CD4-positive, alpha-beta memory T cell (primary cell): ENCODE measurements at regions of chr22 and their contacts with region 1.

Region 1: DNA sequence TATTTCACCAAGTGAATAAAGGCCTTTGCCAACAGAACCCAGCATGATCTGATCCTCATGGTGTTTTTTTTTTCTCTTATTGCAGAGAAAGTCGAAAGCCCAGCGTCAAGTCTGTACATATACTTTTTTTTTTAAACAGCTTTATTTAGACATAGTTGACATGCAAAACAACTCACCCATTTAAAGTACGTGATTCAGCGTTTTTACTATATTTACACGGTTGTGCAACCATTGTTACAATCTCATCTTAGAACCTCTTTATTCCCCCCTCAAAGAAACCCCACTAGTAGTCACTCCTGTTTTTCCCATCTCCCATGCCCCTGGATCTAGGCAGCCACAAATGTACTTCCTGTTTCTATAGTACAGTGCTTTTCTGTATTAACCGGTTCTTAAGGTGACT is 20.6 kb upstream of the AP1B1 start:
- DNase-seq: no peak
- H3K4me3 ChIP-seq: no peak overlapping the region
- H3K4me3 Mint-ChIP-seq: no peak overlapping the region
- H3K27ac ChIP-seq: no peak overlapping the region
- H3K27ac Mint-ChIP-seq: peak overlapping the region in 1 of 7 donors; percentile 49
- H3K4me1 ChIP-seq: no peaks in the 10 kb centered on the region
- H3K4me1 Mint-ChIP-seq: peaks cover under 1 to 6% (median 4%) of the 10 kb centered on the region in 4 donors
- H3K27me3 ChIP-seq: no peaks in the 10 kb centered on the region
- H3K27me3 Mint-ChIP-seq: no peaks in the 10 kb centered on the region

Region 2: DNA sequence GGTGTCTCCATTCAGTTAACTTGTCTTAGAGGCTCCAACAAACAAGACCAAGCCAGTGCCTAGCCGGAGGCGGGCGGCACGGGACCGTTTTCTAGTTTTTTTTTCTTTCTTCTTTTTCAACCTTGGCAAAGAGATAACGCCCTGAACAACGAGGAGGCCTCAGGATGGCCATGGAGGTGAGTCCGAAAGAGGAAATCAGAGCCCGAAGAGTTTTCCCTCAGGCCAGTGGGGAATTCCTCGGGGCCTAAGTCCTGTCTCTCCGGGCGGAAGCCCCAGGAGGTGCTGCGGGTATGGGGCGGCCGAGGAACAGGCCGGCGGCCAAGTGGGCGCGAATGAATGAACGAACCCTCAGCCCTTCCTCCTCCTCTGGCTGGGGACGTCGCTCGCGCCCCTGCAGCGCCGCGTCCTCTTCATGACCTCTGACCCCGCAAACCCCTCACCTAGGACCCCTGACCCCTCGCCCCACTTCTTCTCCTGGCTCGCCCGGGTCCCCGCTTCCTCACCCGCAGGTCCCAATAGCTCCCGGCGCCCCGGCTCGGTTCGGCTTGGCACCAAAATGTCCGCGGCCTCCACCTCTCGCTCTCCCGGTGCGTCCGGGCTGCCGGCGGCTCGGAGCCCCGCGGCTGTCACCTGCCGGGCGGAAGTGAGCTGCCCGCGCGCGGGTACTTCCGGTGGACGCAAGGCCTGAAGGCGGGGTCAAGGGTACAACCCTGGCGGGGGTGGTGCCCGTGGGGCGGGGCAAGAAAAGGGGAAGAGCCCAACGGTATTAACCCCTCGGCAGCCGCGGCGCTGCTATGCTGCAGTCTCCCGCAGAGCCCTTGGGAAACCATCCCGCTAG is 20.8 kb before region 1 on chr22 and contains the start of gene AP1B1:
- CTCF ChIA-PET with region 1: interaction called, 8 read pairs
- POLR2A ChIA-PET with region 1: no interaction called
- intact Hi-C with region 1: loop called (anchors 2 kb)
- DNase-seq: peak; percentile 87 to 91 (median 88)
- H3K4me3 ChIP-seq: peak within 1 kb of the TSS; percentile 64 to 77
- H3K4me3 Mint-ChIP-seq: peak within 1 kb of the TSS; percentile 89 to 98 (median 93)
- H3K27ac ChIP-seq: peak within 1 kb of the TSS; percentile 86
- H3K27ac Mint-ChIP-seq: peak within 1 kb of the TSS; percentile 90 to 96 (median 95)
- H3K4me1 ChIP-seq: peaks cover 54% of the 10 kb centered on the region
- H3K4me1 Mint-ChIP-seq: peaks cover 26 to 54% (median 39%) of the 10 kb centered on the region in 4 donors
- H3K27me3 ChIP-seq: no peaks in the 10 kb centered on the region
- H3K27me3 Mint-ChIP-seq: no peaks in the 10 kb centered on the region
- total RNA-seq, gene AP1B1: 41.3 to 42.7 TPM

Region 3: DNA sequence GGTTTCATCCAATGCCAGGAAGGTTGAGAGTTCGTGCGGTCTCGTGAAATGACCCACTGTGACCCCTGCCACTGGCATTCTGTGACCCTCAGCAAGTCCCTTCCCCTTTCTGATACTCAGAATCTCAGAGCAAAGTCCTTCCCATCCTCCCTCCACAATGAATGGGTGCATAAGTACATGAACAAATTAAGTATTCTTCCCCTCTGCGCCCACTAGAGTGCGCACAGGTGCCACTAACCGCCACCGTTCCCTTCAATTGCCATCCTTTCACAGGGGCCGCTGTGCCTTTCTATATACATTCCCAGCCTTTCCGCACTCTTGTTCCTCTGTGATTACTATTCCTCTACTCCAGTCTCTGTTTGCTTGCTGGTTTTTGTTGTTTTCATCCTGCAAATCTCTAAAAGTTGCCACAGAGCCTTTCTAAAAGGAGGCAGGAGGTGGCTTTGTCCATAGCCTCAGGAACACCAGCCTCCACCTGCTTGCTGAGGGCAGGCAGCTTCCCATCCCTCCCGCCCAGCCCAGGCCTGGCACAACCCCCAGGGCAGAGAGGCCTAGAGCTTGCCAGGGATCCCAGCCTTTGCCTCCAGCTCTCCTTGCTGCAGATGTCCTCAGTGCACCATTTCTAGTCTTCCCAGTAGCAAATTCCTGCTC is 13.9 kb before region 1 on chr22:
- CTCF ChIA-PET with region 1: interaction called, 8 read pairs
- POLR2A ChIA-PET with region 1: no interaction called
- intact Hi-C with region 1: loop called (anchors 1 kb)
- DNase-seq: peak; percentile 50 to 65 (median 60)
- H3K4me3 ChIP-seq: no peak overlapping the region
- H3K4me3 Mint-ChIP-seq: peak overlapping the region in 1 of 8 donors; percentile 3
- H3K27ac ChIP-seq: no peak overlapping the region
- H3K27ac Mint-ChIP-seq: peak overlapping the region in 1 of 7 donors; percentile 43
- H3K4me1 ChIP-seq: peaks cover 3% of the 10 kb centered on the region
- H3K4me1 Mint-ChIP-seq: peaks cover 5 to 11% (median 6%) of the 10 kb centered on the region in 4 donors
- H3K27me3 ChIP-seq: no peaks in the 10 kb centered on the region
- H3K27me3 Mint-ChIP-seq: no peaks in the 10 kb centered on the region

Region 4: DNA sequence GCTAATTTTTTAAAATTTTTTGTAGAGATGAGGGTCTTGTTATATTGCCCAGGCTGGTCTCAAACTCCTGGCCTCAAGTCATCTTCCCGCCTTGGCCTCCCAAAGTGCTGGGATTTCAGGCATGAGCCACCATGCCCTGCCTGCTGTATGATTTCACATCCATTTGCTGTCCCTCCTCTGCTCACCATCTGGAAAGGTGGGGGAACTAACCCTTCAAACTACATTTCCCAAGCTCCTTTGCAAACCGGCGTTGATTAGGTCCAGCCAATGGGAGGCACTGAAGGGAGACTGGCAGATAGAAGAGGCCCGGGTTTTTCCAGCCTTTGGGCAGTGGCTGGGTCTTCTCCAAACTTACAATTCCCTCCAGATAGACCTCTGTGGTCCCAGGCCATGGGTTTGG is 48.8 kb after region 1 on chr22:
- CTCF ChIA-PET with region 1: no interaction called
- POLR2A ChIA-PET with region 1: no interaction called
- intact Hi-C with region 1: no loop called
- DNase-seq: no peak
- H3K4me3 ChIP-seq: no peak overlapping the region
- H3K4me3 Mint-ChIP-seq: no peak overlapping the region
- H3K27ac ChIP-seq: no peak overlapping the region
- H3K27ac Mint-ChIP-seq: no peak overlapping the region
- H3K4me1 ChIP-seq: no peaks in the 10 kb centered on the region
- H3K4me1 Mint-ChIP-seq: no peaks in the 10 kb centered on the region
- H3K27me3 ChIP-seq: no peaks in the 10 kb centered on the region
- H3K27me3 Mint-ChIP-seq: no peaks in the 10 kb centered on the region

Region 5: GRCh38 chr22:29766632-29767170 is 357.8 kb after region 1 on chr22 and contains the start of gene ZMAT5:
- CTCF ChIA-PET with region 1: no interaction called
- POLR2A ChIA-PET with region 1: no interaction called
- intact Hi-C with region 1: loop called (anchors 10 kb)
- DNase-seq: peak; percentile 93 to 96 (median 95)
- H3K4me3 ChIP-seq: peak within 1 kb of the TSS; percentile 96 to 100
- H3K4me3 Mint-ChIP-seq: peak within 1 kb of the TSS; percentile 95 to 100 (median 99)
- H3K27ac ChIP-seq: peak within 1 kb of the TSS; percentile 87
- H3K27ac Mint-ChIP-seq: peak within 1 kb of the TSS; percentile 38 to 99 (median 99)
- H3K4me1 ChIP-seq: peaks cover 29% of the 10 kb centered on the region
- H3K4me1 Mint-ChIP-seq: peaks cover 22 to 53% (median 28%) of the 10 kb centered on the region in 4 donors
- H3K27me3 ChIP-seq: no peaks in the 10 kb centered on the region
- H3K27me3 Mint-ChIP-seq: no peaks in the 10 kb centered on the region
- total RNA-seq, gene ZMAT5: 16.3 to 20.4 TPM